CD4-positive, alpha-beta memory T cell (primary cell): ENCODE measurements at regions of chr6 and their contacts with region 1.

Region 1: DNA sequence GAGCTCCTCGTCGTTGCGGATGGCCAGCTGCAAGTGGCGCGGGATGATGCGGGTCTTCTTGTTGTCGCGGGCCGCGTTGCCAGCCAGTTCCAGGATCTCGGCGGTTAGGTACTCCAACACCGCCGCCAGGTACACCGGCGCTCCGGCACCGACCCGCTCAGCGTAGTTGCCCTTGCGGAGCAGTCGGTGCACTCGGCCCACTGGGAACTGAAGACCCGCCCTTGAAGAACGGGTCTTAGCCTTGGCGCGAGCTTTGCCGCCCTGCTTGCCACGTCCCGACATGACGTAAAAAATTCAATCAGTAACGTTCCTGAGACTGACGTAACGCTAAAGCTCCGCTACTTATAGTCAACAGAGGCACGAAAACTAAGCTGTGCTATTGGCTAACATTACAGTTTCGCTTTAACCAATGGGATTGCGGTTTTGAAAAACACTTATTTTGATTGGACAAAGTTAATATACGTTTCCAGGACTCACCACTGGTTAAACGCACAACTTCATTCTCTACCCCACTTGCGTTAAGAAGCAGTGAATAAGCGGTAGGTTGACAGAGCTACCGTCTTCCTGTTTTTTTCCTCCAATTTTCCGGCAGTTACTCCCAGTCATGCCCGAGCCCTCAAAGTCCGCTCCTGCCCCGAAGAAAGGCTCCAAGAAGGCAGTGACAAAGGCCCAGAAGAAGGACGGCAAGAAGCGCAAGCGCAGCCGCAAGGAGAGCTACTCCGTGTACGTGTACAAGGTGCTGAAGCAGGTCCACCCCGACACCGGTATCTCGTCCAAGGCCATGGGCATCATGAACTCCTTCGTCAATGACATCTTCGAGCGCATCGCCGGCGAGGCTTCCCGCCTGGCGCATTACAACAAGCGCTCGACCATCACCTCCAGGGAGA is 73.9 kb downstream of the OR2B2 start:
- DNase-seq: peak; percentile 91 to 94 (median 92)
- H3K4me3 ChIP-seq: peak overlapping the region; percentile 63 to 67
- H3K4me3 Mint-ChIP-seq: no peak overlapping the region
- H3K27ac ChIP-seq: peak overlapping the region; percentile 93
- H3K27ac Mint-ChIP-seq: no peak overlapping the region
- H3K4me1 ChIP-seq: peaks cover 30% of the 10 kb centered on the region
- H3K4me1 Mint-ChIP-seq: peaks cover 6 to 20% (median 12%) of the 10 kb centered on the region in 4 donors
- H3K27me3 ChIP-seq: no peaks in the 10 kb centered on the region
- H3K27me3 Mint-ChIP-seq: peaks cover 2 to 3% of the 10 kb centered on the region in 2 donors

Region 2: DNA sequence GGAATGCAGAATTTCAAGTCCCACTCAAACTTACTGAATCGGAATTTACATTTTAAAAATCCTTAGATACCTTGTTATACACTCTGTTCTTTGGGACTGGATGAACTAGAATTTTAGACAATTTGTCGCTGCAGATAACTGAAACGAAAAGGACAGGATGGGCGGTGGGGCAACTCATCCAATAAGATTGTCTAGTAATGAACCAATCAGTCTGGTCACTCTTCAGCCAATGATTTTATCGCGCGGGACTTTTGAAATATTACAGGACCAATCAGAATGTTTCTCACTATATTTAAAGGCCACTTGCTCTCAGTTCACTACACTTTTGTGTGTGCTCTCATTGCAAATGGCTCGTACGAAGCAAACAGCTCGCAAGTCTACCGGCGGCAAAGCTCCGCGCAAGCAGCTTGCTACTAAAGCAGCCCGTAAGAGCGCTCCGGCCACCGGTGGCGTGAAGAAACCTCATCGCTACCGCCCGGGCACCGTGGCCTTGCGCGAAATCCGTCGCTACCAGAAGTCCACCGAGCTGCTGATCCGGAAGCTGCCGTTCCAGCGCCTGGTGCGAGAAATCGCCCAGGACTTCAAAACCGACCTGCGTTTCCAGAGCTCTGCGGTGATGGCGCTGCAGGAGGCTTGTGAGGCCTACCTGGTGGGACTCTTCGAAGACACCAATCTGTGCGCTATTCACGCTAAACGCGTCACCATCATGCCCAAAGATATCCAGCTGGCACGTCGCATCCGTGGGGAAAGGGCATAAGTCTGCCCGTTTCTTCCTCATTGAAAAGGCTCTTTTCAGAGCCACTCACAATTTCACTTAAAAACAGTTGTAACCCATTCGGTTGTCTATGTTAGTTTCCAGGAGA is 1793.0 kb before region 1 on chr6:
- CTCF ChIA-PET with region 1: no interaction called
- POLR2A ChIA-PET with region 1: interaction called, 19 read pairs
- intact Hi-C with region 1: no loop called
- DNase-seq: peak; percentile 88 to 91 (median 90)
- H3K4me3 ChIP-seq: peak overlapping the region; percentile 72 to 74
- H3K4me3 Mint-ChIP-seq: peak overlapping the region; percentile 88 to 98 (median 94)
- H3K27ac ChIP-seq: peak overlapping the region; percentile 76
- H3K27ac Mint-ChIP-seq: peak overlapping the region; percentile 93 to 99 (median 98)
- H3K4me1 ChIP-seq: peaks cover 14% of the 10 kb centered on the region
- H3K4me1 Mint-ChIP-seq: peaks cover 12 to 28% (median 20%) of the 10 kb centered on the region in 4 donors
- H3K27me3 ChIP-seq: no peaks in the 10 kb centered on the region
- H3K27me3 Mint-ChIP-seq: no peaks in the 10 kb centered on the region

Region 3: DNA sequence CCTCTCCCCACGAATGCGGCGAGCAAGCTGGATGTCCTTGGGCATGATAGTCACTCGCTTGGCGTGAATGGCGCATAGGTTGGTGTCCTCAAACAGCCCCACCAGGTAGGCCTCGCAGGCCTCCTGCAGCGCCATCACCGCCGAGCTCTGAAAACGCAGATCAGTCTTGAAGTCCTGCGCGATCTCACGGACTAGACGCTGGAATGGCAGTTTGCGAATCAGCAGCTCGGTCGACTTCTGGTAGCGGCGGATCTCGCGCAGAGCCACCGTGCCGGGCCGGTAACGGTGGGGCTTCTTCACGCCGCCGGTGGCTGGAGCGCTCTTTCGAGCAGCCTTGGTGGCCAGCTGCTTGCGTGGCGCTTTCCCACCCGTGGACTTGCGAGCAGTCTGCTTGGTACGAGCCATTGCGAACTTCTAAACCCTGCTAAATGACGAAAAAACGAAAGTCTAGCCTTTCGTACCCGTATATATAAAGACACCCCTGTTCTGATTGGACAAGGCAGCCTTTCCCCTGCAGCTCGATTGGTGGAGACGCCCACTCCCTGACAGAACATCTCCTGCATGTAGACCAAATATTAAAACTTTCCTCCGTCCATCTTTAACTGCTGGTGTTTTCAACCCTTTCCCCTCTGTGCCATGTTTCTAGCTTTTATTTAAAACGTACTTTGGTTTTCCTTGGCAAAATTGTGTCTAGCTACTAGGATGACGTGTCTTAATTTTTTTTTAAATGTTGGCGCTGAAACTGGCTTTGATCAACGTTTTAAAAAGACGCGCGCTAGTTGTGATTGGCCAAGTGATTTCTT is 1641.3 kb before region 1 on chr6:
- CTCF ChIA-PET with region 1: no interaction called
- POLR2A ChIA-PET with region 1: interaction called, 55 read pairs
- intact Hi-C with region 1: loop called (anchors 5 kb)
- DNase-seq: peak; percentile 92 to 93 (median 92)
- H3K4me3 ChIP-seq: peak overlapping the region; percentile 83 to 97
- H3K4me3 Mint-ChIP-seq: peak overlapping the region; percentile 94 to 99 (median 97)
- H3K27ac ChIP-seq: peak overlapping the region; percentile 84
- H3K27ac Mint-ChIP-seq: peak overlapping the region; percentile 96 to 100 (median 98)
- H3K4me1 ChIP-seq: peaks cover 43% of the 10 kb centered on the region
- H3K4me1 Mint-ChIP-seq: peaks cover 23 to 57% (median 41%) of the 10 kb centered on the region in 4 donors
- H3K27me3 ChIP-seq: no peaks in the 10 kb centered on the region
- H3K27me3 Mint-ChIP-seq: no peaks in the 10 kb centered on the region

Region 4: GRCh38 chr6:27132532-27133280 is 705.6 kb before region 1 on chr6:
- CTCF ChIA-PET with region 1: interaction called, 4 read pairs
- POLR2A ChIA-PET with region 1: interaction called, 80 read pairs
- intact Hi-C with region 1: loop called (anchors 1 kb)
- DNase-seq: peak; percentile 96 to 99 (median 98)
- H3K4me3 ChIP-seq: peak overlapping the region; percentile 72 to 90
- H3K4me3 Mint-ChIP-seq: no peak overlapping the region
- H3K27ac ChIP-seq: peak overlapping the region; percentile 93
- H3K27ac Mint-ChIP-seq: no peak overlapping the region
- H3K4me1 ChIP-seq: peaks cover 27% of the 10 kb centered on the region
- H3K4me1 Mint-ChIP-seq: peaks cover 0 to 24% (median 10%) of the 10 kb centered on the region in 4 donors
- H3K27me3 ChIP-seq: no peaks in the 10 kb centered on the region
- H3K27me3 Mint-ChIP-seq: no peaks in the 10 kb centered on the region

Region 5: GRCh38 chr6:27582928-27583725 is 255.2 kb before region 1 on chr6:
- CTCF ChIA-PET with region 1: no interaction called
- POLR2A ChIA-PET with region 1: no interaction called
- intact Hi-C with region 1: no loop called
- DNase-seq: no peak
- H3K4me3 ChIP-seq: no peak overlapping the region
- H3K4me3 Mint-ChIP-seq: no peak overlapping the region
- H3K27ac ChIP-seq: no peak overlapping the region
- H3K27ac Mint-ChIP-seq: peak overlapping the region in 1 of 7 donors; percentile 22
- H3K4me1 ChIP-seq: no peaks in the 10 kb centered on the region
- H3K4me1 Mint-ChIP-seq: no peaks in the 10 kb centered on the region
- H3K27me3 ChIP-seq: peaks cover 18% of the 10 kb centered on the region
- H3K27me3 Mint-ChIP-seq: peaks cover 49 to 62% of the 10 kb centered on the region in 2 donors

Region 6: DNA sequence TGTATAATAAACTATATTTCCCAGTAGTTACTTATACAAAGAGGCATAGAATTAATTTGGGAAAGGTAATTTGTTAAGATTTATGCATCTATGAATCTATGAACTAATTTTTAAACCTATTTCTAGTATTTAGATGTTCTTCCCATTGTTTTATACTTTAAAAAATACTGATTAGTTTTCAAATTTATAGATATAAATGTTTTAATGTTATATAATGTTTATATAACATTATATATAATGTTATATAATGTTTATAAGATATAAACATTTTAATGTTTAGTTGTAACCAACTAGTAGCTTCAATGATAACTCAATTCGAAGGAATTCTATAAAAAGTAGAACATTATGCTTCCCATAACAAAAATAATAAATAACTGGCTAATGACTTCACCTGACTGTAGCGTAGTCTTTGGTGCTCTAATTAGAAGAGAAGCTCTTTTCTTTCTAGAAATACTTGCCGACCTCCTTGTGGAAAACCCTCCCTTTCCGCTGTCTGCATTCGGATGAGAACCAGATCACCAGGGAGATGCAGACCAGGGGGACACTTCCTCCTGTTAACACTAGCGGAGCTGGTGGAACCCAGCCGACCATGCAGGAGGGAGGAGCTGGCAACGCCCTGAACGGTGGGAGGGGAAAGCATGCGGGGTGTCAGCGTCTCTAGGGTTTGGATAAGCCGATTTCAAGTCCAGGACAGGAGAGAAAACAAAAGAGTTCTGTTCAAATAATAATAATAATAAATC is 84.5 kb before region 1 on chr6:
- CTCF ChIA-PET with region 1: interaction called, 3 read pairs
- POLR2A ChIA-PET with region 1: interaction called, 6 read pairs
- intact Hi-C with region 1: loop called (anchors 1 kb)
- DNase-seq: peak; percentile 27 to 66 (median 44)
- H3K4me3 ChIP-seq: peak overlapping the region; percentile 50 to 63
- H3K4me3 Mint-ChIP-seq: peak overlapping the region; percentile 85 to 99 (median 93)
- H3K27ac ChIP-seq: no peak overlapping the region
- H3K27ac Mint-ChIP-seq: peak overlapping the region; percentile 16 to 100 (median 99)
- H3K4me1 ChIP-seq: peaks cover 20% of the 10 kb centered on the region
- H3K4me1 Mint-ChIP-seq: peaks cover 15 to 47% (median 26%) of the 10 kb centered on the region in 4 donors
- H3K27me3 ChIP-seq: no peaks in the 10 kb centered on the region
- H3K27me3 Mint-ChIP-seq: peaks cover 0 to 5% of the 10 kb centered on the region in 2 donors

Region 7: DNA sequence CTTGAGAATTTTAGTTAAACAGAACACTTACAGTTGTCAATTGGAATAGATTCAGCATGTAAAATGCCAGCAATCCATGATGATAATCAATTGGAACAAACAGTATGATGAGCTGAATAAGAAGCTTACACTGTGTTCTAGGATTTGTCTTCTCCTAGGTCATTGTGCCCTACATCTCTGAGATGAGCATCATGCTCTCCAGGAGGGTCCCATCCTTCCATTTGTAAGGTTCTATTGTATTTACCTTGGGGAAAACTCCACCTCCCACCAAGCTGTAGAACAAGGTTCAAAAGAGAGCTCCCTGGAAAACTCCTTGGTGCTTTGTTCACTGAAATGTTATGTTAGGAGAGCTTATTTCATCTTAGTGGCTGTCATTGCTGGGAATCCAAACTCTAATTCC is 13.1 kb after region 1 on chr6:
- CTCF ChIA-PET with region 1: interaction called, 3 read pairs
- POLR2A ChIA-PET with region 1: interaction called, 42 read pairs
- intact Hi-C with region 1: no loop called
- DNase-seq: no peak
- H3K4me3 ChIP-seq: no peak overlapping the region
- H3K4me3 Mint-ChIP-seq: no peak overlapping the region
- H3K27ac ChIP-seq: no peak overlapping the region
- H3K27ac Mint-ChIP-seq: no peak overlapping the region
- H3K4me1 ChIP-seq: no peaks in the 10 kb centered on the region
- H3K4me1 Mint-ChIP-seq: no peaks in the 10 kb centered on the region
- H3K27me3 ChIP-seq: no peaks in the 10 kb centered on the region
- H3K27me3 Mint-ChIP-seq: peaks cover 1 to 4% of the 10 kb centered on the region in 2 donors

Region 8: DNA sequence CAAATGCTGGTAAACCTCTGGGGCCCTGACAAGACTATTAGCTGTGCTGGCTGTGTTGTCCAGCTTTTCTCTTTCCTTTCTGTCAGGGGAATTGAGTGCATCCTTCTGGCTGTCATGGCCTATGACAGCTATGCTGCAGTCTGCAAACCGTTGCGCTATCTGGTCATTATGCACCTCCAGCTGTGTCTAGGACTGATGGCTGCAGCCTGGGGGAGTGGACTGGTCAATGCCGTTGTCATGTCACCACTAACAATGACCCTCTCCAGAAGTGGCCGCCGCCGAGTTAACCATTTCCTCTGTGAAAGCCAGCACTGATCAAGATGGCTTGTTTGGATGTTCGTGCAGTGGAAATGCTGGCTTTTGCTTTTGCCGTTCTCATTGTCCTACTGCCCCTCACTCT is 139.1 kb after region 1 on chr6:
- CTCF ChIA-PET with region 1: no interaction called
- POLR2A ChIA-PET with region 1: no interaction called
- intact Hi-C with region 1: no loop called
- DNase-seq: no peak
- H3K4me3 ChIP-seq: no peak overlapping the region
- H3K4me3 Mint-ChIP-seq: no peak overlapping the region
- H3K27ac ChIP-seq: no peak overlapping the region
- H3K27ac Mint-ChIP-seq: no peak overlapping the region
- H3K4me1 ChIP-seq: no peaks in the 10 kb centered on the region
- H3K4me1 Mint-ChIP-seq: no peaks in the 10 kb centered on the region
- H3K27me3 ChIP-seq: peaks cover 3% of the 10 kb centered on the region
- H3K27me3 Mint-ChIP-seq: peaks cover 15 to 27% of the 10 kb centered on the region in 2 donors

Region 9: DNA sequence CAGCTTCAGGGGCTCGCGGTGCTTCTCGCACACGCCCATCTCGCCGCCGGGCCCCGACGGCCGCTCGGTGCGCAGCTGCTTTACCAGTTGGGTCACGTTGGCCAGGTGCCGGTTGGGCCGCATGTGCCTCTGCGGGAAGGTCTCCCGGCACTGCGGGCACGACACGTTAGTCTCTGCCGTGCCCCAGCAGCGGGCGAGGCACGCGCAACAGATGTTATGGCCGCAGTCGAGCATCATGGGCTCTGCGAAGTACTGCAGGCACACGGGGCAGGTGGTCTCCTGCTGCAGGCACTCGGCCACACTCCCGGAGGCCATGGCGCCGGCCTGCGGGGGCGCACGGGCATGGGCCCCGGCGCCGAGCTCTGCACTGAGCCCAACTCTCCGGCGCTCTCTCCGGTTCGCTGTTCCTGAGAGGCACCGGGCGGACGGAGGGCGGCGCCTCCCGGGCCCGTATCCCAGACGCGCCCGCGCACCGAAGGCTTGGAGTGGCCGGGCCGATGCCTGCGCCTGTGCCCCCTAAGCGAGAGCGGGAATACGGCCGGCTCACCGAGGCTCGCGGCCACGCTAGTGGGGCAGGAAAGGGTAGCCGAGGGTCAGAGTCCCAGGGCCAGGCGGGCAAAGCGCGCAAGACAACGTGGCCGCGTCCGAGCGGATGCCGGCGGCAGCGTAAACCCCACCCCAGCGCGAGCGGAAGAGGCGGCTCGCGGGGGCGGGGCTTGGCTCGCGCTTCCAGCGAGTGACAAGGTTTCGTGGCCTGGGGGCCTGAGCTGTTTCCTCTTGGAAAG is 1085.2 kb after region 1 on chr6 and contains the start of gene TRIM27:
- CTCF ChIA-PET with region 1: no interaction called
- POLR2A ChIA-PET with region 1: interaction called, 12 read pairs
- intact Hi-C with region 1: no loop called
- DNase-seq: peak; percentile 76 to 84 (median 78)
- H3K4me3 ChIP-seq: peak within 1 kb of the TSS; percentile 82 to 91
- H3K4me3 Mint-ChIP-seq: peak within 1 kb of the TSS; percentile 92 to 98 (median 95)
- H3K27ac ChIP-seq: peak within 1 kb of the TSS; percentile 82
- H3K27ac Mint-ChIP-seq: peak within 1 kb of the TSS; percentile 86 to 96 (median 94)
- H3K4me1 ChIP-seq: peaks cover 46% of the 10 kb centered on the region
- H3K4me1 Mint-ChIP-seq: peaks cover 30 to 49% (median 41%) of the 10 kb centered on the region in 4 donors
- H3K27me3 ChIP-seq: no peaks in the 10 kb centered on the region
- H3K27me3 Mint-ChIP-seq: peaks cover 0 to 2% of the 10 kb centered on the region in 2 donors
- total RNA-seq, gene TRIM27: 102 to 108 TPM